ENCODE measurements at regions of chr12 and their contacts with region 1.

Region 1: DNA sequence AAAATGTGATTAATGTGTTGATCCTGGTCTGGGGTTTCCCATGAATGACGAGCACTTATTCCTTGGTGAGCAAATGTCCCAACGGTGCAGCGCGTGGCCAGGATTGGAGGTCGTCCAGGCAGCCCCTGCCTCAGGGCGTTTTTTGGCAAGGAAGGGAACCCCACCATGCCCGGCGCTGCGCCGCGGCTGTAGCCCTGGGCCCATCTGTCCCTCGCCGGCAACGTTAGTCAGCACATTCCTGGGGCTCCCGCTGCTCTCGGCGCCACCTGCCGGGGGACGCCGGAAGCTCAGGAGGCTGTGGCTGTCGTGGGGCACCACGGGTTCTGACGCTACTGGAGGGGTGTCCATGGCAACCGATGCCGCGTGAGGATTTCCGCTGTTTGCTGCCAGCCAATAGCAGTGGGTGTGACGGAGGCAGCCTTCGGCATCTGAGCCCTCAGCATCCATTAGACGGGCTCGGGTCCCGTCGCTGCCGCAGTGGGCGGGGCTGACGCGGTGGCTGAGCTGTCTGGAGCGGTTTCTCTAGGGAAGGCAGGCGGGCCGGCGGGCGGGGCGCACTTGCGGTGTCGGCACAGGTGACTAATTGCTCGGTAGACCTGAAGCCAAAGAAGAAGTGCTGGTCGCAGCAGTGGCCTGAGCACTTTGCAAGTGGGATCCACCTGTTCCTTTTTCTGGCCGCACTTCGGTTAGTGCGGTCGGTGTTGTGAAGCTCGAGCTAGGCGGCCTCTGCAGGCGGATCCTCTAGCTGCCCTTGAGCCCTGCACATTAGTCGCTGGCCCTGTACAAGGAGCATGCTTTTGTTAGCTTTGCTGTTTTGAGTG is 29.5 kb downstream of the RAB35 start:
- DNase-seq: peak; percentile 98 to 100 (median 99)
- ATAC-seq: peak; percentile 97
- H3K4me3 ChIP-seq: peak overlapping the region; percentile 70
- H3K4me3 Mint-ChIP-seq: peak overlapping the region; percentile 70 to 88 (median 82)
- H3K27ac ChIP-seq: peak overlapping the region; percentile 60
- H3K27ac Mint-ChIP-seq: peak overlapping the region; percentile 71 to 93 (median 89)
- H3K4me1 ChIP-seq: peaks cover 5 to 8% of the 10 kb centered on the region in 2 donors
- H3K4me1 Mint-ChIP-seq: peaks cover 5 to 39% (median 16%) of the 10 kb centered on the region in 7 donors
- H3K27me3 ChIP-seq: no peaks in the 10 kb centered on the region
- H3K27me3 Mint-ChIP-seq: peaks cover 0 to 3% (median 0%) of the 10 kb centered on the region in 5 donors

Region 2: DNA sequence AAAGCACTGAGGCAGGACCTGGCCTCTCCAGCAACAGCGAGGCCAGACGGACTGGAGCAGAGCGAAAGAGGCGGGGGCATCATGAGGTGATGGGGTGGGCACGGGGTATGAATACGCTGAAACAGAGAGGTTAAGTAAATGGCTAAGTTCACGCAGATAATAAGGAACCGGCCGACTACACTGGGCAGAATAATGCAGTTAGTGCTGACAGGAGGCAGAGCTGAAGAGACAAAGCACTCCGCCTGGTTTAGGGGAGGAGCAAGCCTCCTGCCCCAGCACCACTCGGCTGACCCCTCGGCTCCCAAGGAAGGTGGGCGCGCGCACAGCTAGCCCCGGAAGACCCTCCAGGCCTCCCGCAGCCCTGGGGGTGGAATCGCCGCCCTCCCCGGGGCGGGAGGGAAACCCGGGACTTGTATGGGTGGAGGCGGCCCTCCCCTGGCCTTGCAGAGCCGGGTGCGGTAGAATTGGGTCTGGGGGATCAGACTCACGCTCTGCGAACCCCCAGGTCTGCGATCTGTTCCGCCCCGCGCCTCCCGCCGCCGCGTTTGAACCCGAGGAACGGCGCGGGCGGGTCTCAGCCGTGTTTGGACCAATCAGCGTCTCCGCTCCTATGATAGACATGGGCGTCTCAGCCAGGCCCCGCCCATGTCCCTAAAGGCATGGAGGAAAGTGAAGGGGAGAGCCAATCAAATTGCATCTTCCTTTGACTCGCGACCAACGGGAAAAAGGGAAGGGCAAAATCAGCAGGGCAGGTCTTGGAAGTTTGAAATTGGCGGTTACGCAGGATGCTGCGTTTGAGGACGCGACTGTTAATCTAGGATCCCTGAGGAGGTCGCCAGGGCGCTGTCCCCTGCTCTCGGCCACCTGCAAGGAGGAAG is 210.0 kb before region 1 on chr12 and contains the start of gene CIT:
- CTCF ChIA-PET with region 1: interaction called, 3 read pairs
- POLR2A ChIA-PET with region 1: no interaction called
- intact Hi-C with region 1: loop called in 1 of 2 experiments (anchors 1 kb)
- DNase-seq: peak; percentile 71 to 86 (median 81)
- ATAC-seq: peak; percentile 100
- H3K4me3 ChIP-seq: peak within 1 kb of the TSS; percentile 86
- H3K4me3 Mint-ChIP-seq: peak within 1 kb of the TSS; percentile 78 to 97 (median 88)
- H3K27ac ChIP-seq: peak within 1 kb of the TSS; percentile 58
- H3K27ac Mint-ChIP-seq: peak within 1 kb of the TSS in 8 of 9 donors; percentile 5 to 83 (median 37)
- H3K4me1 ChIP-seq: no peaks in the 10 kb centered on the region
- H3K4me1 Mint-ChIP-seq: peaks cover 10 to 27% (median 15%) of the 10 kb centered on the region in 7 donors
- H3K27me3 ChIP-seq: no peaks in the 10 kb centered on the region
- H3K27me3 Mint-ChIP-seq: peaks cover 0 to 14% (median under 1%) of the 10 kb centered on the region in 5 donors
- total RNA-seq, gene CIT: 1.6 to 69.9 (median 3.6) TPM

Region 3: DNA sequence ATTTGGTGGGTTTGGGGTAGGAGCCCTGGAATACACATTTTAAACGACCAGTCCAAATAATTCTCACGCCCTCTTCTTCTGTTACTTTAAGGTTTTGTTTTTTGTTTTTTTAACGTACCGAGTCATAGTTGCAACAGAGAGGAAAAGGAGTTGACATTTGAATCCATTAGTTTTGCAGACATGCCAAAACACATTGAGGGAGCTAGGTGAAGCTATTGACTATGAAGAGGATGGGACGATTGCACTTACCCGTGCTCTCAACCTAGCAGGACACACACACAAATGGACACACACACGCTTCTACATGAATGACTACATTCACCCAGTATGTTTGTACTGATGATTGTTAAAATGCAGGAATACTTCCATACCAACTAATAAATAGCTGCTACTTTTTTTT is 155.6 kb before region 1 on chr12:
- CTCF ChIA-PET with region 1: interaction called, 3 read pairs
- POLR2A ChIA-PET with region 1: interaction called, 3 read pairs
- intact Hi-C with region 1: loop called (anchors 1 to 2 kb)
- DNase-seq: no peak
- ATAC-seq: no peak
- H3K4me3 ChIP-seq: no peak overlapping the region
- H3K4me3 Mint-ChIP-seq: no peak overlapping the region
- H3K27ac ChIP-seq: no peak overlapping the region
- H3K27ac Mint-ChIP-seq: no peak overlapping the region
- H3K4me1 ChIP-seq: no peaks in the 10 kb centered on the region
- H3K4me1 Mint-ChIP-seq: no peaks in the 10 kb centered on the region
- H3K27me3 ChIP-seq: no peaks in the 10 kb centered on the region
- H3K27me3 Mint-ChIP-seq: peaks cover 0 to 9% (median 0%) of the 10 kb centered on the region in 5 donors

Region 4: DNA sequence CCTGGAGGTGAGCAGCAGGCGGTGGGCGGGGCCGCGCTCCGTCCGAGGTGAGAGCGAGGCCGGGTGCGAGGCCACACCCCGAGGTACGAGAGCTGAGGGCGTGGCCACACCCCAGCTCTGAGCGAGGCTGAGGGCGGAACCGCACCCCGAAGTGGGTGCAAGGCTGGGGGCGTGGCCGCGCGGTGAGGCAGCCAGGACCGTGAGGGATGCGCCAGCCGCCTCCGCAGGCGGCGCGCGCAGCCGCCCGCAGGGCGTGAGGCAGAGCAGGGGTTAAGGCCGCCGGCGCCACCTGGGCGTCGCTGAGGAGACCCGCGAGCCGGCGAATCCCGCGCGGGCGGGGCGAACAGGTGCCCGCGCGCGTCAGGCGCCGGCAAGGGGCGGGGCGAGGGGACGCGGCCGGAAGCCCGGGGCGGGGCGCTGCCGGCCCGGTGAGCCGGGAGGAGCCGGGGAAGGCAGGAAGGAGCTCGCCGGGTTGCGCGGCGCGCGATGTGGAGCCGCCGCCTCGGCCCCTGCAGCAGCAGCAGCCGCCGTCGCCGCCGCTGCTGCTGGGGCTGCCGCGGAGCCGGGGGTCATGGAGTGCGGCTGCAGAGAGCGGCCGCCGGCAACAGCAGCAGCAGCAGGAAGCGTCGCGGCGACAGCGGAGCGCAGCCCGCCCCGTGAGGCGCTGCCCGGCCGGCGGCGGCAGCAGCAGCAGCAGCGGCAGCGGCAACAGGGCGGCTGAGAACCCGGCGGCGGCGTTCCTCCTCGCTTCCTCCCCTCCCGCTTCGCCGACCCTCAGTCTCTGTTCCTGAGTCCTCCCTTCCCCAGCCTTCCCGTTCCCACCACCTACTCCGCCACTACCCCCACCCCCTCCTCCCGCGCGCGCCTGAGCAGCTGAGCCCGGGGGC is 98.0 kb before region 1 on chr12 and contains the start of gene BICDL1:
- CTCF ChIA-PET with region 1: interaction called, 6 read pairs
- POLR2A ChIA-PET with region 1: interaction called, 22 read pairs
- intact Hi-C with region 1: loop called (anchors 1 kb)
- DNase-seq: peak; percentile 95 to 99 (median 98)
- ATAC-seq: peak; percentile 93
- H3K4me3 ChIP-seq: peak within 1 kb of the TSS; percentile 68
- H3K4me3 Mint-ChIP-seq: peak within 1 kb of the TSS; percentile 78 to 95 (median 87)
- H3K27ac ChIP-seq: peak within 1 kb of the TSS; percentile 90
- H3K27ac Mint-ChIP-seq: peak within 1 kb of the TSS; percentile 69 to 98 (median 93)
- H3K4me1 ChIP-seq: peaks cover 18 to 19% of the 10 kb centered on the region in 2 donors
- H3K4me1 Mint-ChIP-seq: peaks cover 18 to 46% (median 38%) of the 10 kb centered on the region in 7 donors
- H3K27me3 ChIP-seq: no peaks in the 10 kb centered on the region
- H3K27me3 Mint-ChIP-seq: peaks cover 0 to 9% (median 0%) of the 10 kb centered on the region in 5 donors
- total RNA-seq, gene BICDL1: 75.8 to 156 (median 143) TPM

Region 5: GRCh38 chr12:120041386-120042231 is 45.4 kb before region 1 on chr12:
- CTCF ChIA-PET with region 1: no interaction called
- POLR2A ChIA-PET with region 1: interaction called, 3 read pairs
- intact Hi-C with region 1: loop called in 1 of 2 experiments (anchors 2 kb)
- DNase-seq: peak in 7 of 9 donors; percentile 26 to 65 (median 61)
- ATAC-seq: peak; percentile 92
- H3K4me3 ChIP-seq: no peak overlapping the region
- H3K4me3 Mint-ChIP-seq: peak overlapping the region; percentile 7 to 85 (median 63)
- H3K27ac ChIP-seq: peak overlapping the region; percentile 57
- H3K27ac Mint-ChIP-seq: peak overlapping the region; percentile 21 to 96 (median 88)
- H3K4me1 ChIP-seq: no peaks in the 10 kb centered on the region
- H3K4me1 Mint-ChIP-seq: peaks cover 11 to 40% (median 22%) of the 10 kb centered on the region in 7 donors
- H3K27me3 ChIP-seq: no peaks in the 10 kb centered on the region
- H3K27me3 Mint-ChIP-seq: no peaks in the 10 kb centered on the region

Region 6: GRCh38 chr12:120116792-120117651 is 30.0 kb after region 1 on chr12:
- CTCF ChIA-PET with region 1: interaction called, 4 read pairs
- POLR2A ChIA-PET with region 1: interaction called, 11 read pairs
- intact Hi-C with region 1: loop called (anchors 1 kb)
- DNase-seq: peak; percentile 95 to 100 (median 98)
- ATAC-seq: peak; percentile 91
- H3K4me3 ChIP-seq: peak overlapping the region; percentile 82
- H3K4me3 Mint-ChIP-seq: peak overlapping the region; percentile 78 to 95 (median 90)
- H3K27ac ChIP-seq: peak overlapping the region; percentile 84
- H3K27ac Mint-ChIP-seq: peak overlapping the region; percentile 80 to 97 (median 90)
- H3K4me1 ChIP-seq: peaks cover 46 to 48% of the 10 kb centered on the region in 2 donors
- H3K4me1 Mint-ChIP-seq: peaks cover 64 to 86% (median 80%) of the 10 kb centered on the region in 7 donors
- H3K27me3 ChIP-seq: no peaks in the 10 kb centered on the region
- H3K27me3 Mint-ChIP-seq: no peaks in the 10 kb centered on the region

Region 7: GRCh38 chr12:120500581-120500980 is 413.6 kb after region 1 on chr12:
- CTCF ChIA-PET with region 1: no interaction called
- POLR2A ChIA-PET with region 1: no interaction called
- intact Hi-C with region 1: no loop called
- DNase-seq: peak in 1 of 9 donors; percentile 13
- ATAC-seq: no peak
- H3K4me3 ChIP-seq: no peak overlapping the region
- H3K4me3 Mint-ChIP-seq: peak overlapping the region in 1 of 10 donors; percentile 27
- H3K27ac ChIP-seq: no peak overlapping the region
- H3K27ac Mint-ChIP-seq: peak overlapping the region in 7 of 9 donors; percentile 4 to 80 (median 39)
- H3K4me1 ChIP-seq: peaks cover 4% of the 10 kb centered on the region in 2 donors
- H3K4me1 Mint-ChIP-seq: peaks cover 13 to 40% (median 27%) of the 10 kb centered on the region in 7 donors
- H3K27me3 ChIP-seq: no peaks in the 10 kb centered on the region
- H3K27me3 Mint-ChIP-seq: no peaks in the 10 kb centered on the region

Region 8: GRCh38 chr12:121015825-121016766 is 929.1 kb after region 1 on chr12 and contains the start of gene C12orf43:
- CTCF ChIA-PET with region 1: no interaction called
- POLR2A ChIA-PET with region 1: no interaction called
- intact Hi-C with region 1: loop called in 1 of 2 experiments (anchors 5 kb)
- DNase-seq: peak; percentile 74 to 93 (median 89)
- ATAC-seq: peak; percentile 99
- H3K4me3 ChIP-seq: peak within 1 kb of the TSS; percentile 88
- H3K4me3 Mint-ChIP-seq: peak within 1 kb of the TSS; percentile 93 to 99 (median 96)
- H3K27ac ChIP-seq: peak within 1 kb of the TSS; percentile 88
- H3K27ac Mint-ChIP-seq: peak within 1 kb of the TSS; percentile 89 to 97 (median 95)
- H3K4me1 ChIP-seq: peaks cover 6 to 11% of the 10 kb centered on the region in 2 donors
- H3K4me1 Mint-ChIP-seq: peaks cover 17 to 32% (median 24%) of the 10 kb centered on the region in 7 donors
- H3K27me3 ChIP-seq: no peaks in the 10 kb centered on the region
- H3K27me3 Mint-ChIP-seq: no peaks in the 10 kb centered on the region
- total RNA-seq, gene C12orf43: 11.8 to 24.2 (median 17.5) TPM